Calu3 (cell line): ENCODE measurements at regions of chr11 and their contacts with region 1.

Region 1: GRCh38 chr11:81644239-81644840 is 1089.3 kb downstream of the FAM181B start:
- DNase-seq: no peak
- H3K4me3 Mint-ChIP-seq: no peak overlapping the region
- H3K27ac Mint-ChIP-seq: no peak overlapping the region
- H3K4me1 Mint-ChIP-seq: no peaks in the 10 kb centered on the region
- H3K27me3 Mint-ChIP-seq: no peaks in the 10 kb centered on the region
- CTCF ChIP-seq: no peak

Region 2: GRCh38 chr11:81368192-81368591 is 276.1 kb before region 1 on chr11:
- CTCF ChIA-PET with region 1: no interaction called
- intact Hi-C with region 1: no loop called
- DNase-seq: no peak
- H3K4me3 Mint-ChIP-seq: no peak overlapping the region
- H3K27ac Mint-ChIP-seq: no peak overlapping the region
- H3K4me1 Mint-ChIP-seq: no peaks in the 10 kb centered on the region
- H3K27me3 Mint-ChIP-seq: no peaks in the 10 kb centered on the region
- CTCF ChIP-seq: no peak

Region 3: DNA sequence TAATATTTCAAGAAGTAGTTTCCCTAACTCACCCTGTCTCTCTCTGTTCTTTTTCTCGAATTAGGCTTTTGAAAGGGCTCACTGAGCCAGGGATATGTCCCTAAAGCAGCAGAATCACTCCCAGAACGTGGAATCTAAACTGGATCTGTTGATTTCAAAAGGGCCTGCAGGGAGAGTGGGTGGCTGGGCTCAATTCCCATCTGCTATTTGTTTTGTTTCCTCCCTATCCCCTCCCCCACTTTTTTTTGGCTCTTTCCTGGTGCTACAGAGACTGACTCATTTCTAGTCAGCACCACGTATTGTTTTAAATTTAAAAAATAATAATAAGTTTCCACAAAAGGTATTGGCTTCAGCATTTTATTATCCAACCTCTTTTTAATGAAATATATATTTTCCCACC is 127.8 kb after region 1 on chr11:
- CTCF ChIA-PET with region 1: no interaction called
- intact Hi-C with region 1: no loop called
- DNase-seq: no peak
- H3K4me3 Mint-ChIP-seq: no peak overlapping the region
- H3K27ac Mint-ChIP-seq: no peak overlapping the region
- H3K4me1 Mint-ChIP-seq: no peaks in the 10 kb centered on the region
- H3K27me3 Mint-ChIP-seq: no peaks in the 10 kb centered on the region
- CTCF ChIP-seq: no peak

Region 4: GRCh38 chr11:82229341-82229740 is 585.0 kb after region 1 on chr11:
- CTCF ChIA-PET with region 1: no interaction called
- intact Hi-C with region 1: loop called (anchors 2 kb)
- DNase-seq: no peak
- H3K4me3 Mint-ChIP-seq: no peak overlapping the region
- H3K27ac Mint-ChIP-seq: no peak overlapping the region
- H3K4me1 Mint-ChIP-seq: no peaks in the 10 kb centered on the region
- H3K27me3 Mint-ChIP-seq: no peaks in the 10 kb centered on the region
- CTCF ChIP-seq: no peak

Region 5: DNA sequence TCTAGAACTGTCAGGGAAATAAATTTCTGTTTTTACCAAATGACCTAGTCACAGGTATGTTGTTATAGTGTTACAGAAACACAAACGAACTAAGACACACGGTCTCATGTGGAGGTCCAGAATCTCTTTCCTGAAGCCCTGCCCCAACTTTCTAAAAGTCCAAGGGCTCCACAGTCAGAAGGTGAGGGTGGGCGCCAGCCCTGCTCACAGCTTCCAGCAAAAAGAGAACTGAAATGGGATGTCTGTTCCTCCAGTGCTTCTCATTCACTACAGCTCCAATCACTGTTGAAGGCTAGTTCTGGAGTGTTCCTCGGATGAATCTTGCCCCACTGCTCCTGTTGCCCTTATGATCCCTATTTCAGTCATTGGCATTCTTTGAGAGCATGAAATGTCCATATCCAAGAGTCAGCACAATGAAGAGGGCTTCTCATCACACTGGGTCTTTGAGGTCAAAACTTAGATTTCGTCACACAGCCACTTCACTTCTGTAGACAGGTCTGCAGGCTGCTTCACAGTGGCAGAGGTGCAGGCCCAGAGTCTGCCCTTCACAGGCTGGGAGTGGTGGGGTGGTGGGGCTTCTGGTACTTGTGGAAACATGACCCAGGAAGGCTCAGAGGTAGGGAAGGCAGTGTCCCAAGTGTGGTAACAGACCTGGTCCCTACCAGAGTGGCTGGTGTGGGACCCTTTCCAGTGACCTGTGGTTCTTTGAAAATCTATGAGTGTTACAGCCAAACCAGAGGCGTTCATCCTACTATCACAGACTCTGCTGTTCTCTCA is 1054.4 kb after region 1 on chr11:
- CTCF ChIA-PET with region 1: interaction called, 3 read pairs
- intact Hi-C with region 1: loop called (anchors 2 kb)
- DNase-seq: no peak
- H3K4me3 Mint-ChIP-seq: no peak overlapping the region
- H3K27ac Mint-ChIP-seq: no peak overlapping the region
- H3K4me1 Mint-ChIP-seq: no peaks in the 10 kb centered on the region
- H3K27me3 Mint-ChIP-seq: peaks cover 17% of the 10 kb centered on the region
- CTCF ChIP-seq: no peak